Body of pancreas (tissue), 4 donors: ENCODE measurements at regions of chr11 and their contacts with region 1.

Region 1: DNA sequence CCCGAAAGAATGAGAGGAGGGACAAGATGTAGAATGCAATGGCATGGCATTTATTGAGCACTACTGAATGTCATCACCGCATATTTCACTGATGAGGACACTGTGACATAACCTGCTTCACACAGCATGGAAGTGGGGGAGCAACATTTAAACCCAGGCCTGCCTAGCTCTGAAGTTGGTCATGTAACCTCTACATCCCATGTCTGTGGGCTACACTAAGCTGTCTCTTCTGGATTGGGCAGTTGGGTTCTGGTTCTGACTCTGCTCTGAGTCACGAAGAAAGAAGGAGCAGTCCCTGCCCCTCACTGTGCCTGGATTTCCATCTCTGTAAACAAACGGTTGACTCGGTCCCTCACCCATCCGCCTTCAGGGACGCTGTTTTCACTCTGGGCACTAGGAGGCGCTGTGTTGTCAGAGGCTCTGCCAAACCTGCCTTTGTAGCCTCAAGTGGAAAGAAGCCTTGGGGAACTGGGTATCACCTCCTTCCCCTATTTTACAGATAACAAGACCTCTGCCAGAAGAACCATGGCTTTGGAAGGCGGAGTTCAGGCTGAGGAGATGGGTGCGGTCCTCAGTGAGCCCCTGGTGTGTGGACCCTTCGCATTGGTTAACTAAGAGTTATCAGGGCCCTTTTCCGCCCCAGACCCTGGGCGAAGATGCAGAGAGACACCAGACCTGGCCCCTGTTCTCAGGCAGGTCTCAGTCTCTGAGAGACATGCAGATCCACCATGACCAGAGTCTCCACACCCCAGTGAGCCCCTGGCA is 12.7 kb upstream of the ARHGEF17 start:
- DNase-seq: peak; percentile 57 to 71 (median 64)
- ATAC-seq: peak; percentile 62
- H3K4me3 ChIP-seq: no peak overlapping the region
- H3K27ac ChIP-seq: no peak overlapping the region
- H3K4me1 ChIP-seq: no peaks in the 10 kb centered on the region
- H3K27me3 ChIP-seq: no peaks in the 10 kb centered on the region
- CTCF ChIP-seq: peak; percentile 62 to 83 (median 73)
- POLR2A ChIP-seq: no peak

Region 2: GRCh38 chr11:73242251-73243079 is 52.9 kb before region 1 on chr11:
- intact Hi-C with region 1: no loop called
- DNase-seq: peak; percentile 74 to 80 (median 78)
- ATAC-seq: peak; percentile 89
- H3K4me3 ChIP-seq: no peak overlapping the region
- H3K27ac ChIP-seq: no peak overlapping the region
- H3K4me1 ChIP-seq: peaks cover 9% of the 10 kb centered on the region
- H3K27me3 ChIP-seq: no peaks in the 10 kb centered on the region
- CTCF ChIP-seq: peak; percentile 87 to 94 (median 90)
- POLR2A ChIP-seq: peak in 1 of 3 donors; percentile 26

Region 3: DNA sequence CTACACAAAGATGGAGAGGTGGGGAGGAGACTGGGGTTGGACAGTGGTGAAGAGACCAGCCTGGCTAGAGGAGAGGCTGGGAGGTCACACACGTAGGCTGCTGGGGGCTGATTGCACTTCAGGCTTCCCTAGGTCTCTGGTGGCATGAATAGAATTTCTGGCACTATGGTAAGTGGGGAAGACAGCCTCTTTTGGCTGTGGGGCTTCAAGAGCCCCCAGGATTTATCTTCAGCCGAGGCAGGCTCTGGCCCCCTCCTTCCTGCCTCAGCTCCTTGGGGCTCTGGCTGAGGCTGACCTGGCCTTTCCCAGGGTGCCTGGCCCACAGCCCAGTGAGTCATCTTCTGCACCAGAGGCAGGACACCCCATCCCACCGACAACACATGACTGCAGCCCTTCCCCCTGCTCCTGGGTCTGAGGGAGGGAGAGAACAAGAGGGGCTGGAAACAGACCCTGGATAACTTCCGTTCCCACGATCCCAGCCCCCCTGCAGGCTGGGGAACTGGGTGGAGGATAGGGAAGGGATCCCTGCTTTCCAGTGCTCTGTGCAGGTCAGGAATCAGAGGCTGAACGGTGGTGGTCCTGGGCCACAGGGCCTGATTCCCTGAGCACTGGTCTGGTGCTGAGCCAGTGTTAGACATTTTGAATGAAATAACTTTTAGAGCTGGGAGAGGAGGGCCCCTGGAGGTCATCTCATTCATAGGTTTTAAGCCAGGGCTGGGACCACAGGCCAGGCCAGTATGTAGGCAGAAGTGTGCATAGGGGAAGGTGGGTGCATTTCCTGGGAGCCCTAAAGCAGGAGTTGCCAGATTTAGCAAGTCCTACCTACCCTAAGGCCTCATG is 39.2 kb after region 1 on chr11:
- intact Hi-C with region 1: loop called (anchors 5 kb)
- DNase-seq: peak in 3 of 4 donors; percentile 57 to 71 (median 64)
- ATAC-seq: peak; percentile 20
- H3K4me3 ChIP-seq: no peak overlapping the region
- H3K27ac ChIP-seq: peak overlapping the region in 1 of 4 donors; percentile 30
- H3K4me1 ChIP-seq: peaks cover 26% of the 10 kb centered on the region
- H3K27me3 ChIP-seq: no peaks in the 10 kb centered on the region
- CTCF ChIP-seq: no peak
- POLR2A ChIP-seq: no peak

Region 4: DNA sequence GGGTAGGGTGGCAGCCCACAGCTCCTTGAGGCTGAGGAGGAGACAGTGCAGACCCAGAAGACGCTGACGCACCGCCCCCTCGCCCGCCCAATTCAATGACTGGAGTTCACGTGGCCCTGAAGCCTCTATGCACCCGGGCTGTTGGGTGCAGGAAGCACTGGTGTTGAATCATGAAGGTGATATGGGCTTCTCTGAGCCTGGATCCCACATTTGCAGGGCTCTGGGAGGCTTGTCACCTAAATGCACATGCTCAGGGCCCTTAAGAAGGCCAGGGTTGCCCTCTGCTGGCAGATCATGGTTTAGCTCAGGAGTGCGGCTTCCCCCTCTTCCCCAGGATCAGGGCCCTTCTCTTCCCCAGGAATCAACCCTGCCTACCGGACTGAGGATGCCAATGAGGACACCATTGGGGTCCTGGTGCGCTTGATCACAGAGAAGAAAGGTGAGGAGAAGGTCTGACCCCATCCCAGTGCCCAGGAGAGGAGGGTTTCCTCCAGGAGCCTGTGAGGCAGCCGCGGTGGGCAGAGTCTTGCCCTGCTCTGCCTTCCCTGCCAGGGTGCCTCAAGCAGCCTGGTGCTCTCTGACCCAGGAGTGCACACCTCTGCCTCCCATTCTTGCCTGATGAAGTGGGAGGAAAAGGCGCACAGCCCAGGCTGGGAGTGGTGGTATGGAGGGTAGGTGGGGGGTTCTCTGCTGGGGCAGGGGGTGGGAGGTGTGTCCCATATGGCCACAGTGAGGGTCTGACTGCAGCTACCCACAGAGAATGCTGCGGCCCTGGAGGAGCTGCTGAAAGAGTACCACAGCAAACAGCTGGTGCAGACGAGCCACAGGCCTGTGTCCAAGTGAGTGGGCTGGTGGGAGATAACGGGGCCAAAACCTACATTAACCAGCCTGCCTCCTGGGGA is 98.3 kb after region 1 on chr11:
- intact Hi-C with region 1: loop called (anchors 10 kb)
- DNase-seq: peak; percentile 77 to 86 (median 80)
- ATAC-seq: peak; percentile 81
- H3K4me3 ChIP-seq: no peak overlapping the region
- H3K27ac ChIP-seq: no peak overlapping the region
- H3K4me1 ChIP-seq: peaks cover 7% of the 10 kb centered on the region
- H3K27me3 ChIP-seq: no peaks in the 10 kb centered on the region
- CTCF ChIP-seq: peak; percentile 64 to 90 (median 77)
- POLR2A ChIP-seq: no peak

Region 5: DNA sequence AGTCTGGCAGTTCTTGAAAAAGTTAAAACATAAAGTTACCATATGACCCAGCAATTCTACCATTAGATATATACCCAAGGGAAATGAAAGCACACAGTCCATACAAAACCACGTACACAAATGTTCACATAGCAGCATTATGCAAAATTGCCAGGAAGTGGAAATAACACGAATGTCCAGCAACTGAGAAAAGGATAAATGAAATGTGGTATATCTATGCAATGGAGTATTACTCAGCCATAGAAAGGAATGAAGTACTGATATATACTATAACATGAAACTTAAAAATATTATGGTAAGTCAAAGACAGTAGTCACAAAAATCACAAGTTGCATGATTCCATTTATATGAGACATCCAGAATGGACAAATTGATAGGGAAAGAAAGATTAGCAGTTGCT is 817.5 kb after region 1 on chr11:
- intact Hi-C with region 1: no loop called
- DNase-seq: no peak
- ATAC-seq: no peak
- H3K4me3 ChIP-seq: no peak overlapping the region
- H3K27ac ChIP-seq: no peak overlapping the region
- H3K4me1 ChIP-seq: no peaks in the 10 kb centered on the region
- H3K27me3 ChIP-seq: no peaks in the 10 kb centered on the region
- CTCF ChIP-seq: no peak
- POLR2A ChIP-seq: no peak